Gastrocnemius medialis (tissue), 4 donors: ENCODE measurements at regions of chr4 and their contacts with region 1.

Region 1: DNA sequence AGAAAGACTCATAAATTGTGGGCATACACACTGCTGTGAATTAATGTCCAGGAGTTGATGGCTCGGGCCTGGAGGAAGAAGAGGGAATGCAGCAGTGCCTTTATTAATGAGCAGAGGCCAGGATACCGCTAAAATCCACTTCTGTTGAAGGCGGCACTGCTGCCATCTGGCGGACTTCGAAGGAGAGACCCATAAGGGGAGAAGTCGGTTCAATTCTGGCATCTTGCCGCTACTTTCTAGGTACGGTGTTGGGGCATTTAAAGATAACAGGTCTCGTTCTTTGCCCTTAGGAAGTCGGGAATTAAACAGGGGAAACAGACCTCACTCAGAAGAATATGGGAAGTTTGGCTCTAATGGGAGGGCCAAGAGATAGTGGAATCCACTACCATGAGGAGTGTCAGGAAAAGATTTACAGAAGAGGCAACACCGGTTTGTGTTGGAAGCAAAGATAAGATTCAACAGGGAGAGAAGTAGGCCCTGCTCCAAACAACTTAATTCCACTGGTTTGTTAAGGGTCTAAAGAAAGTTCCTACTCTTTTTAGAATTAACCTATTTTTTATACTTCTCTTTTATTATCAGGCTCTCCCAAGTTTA is 133.6 kb upstream of the GIMD1 start:
- DNase-seq: peak in 1 of 2 donors; percentile 18
- ATAC-seq: no peak
- H3K4me3 ChIP-seq: no peak overlapping the region
- H3K27ac ChIP-seq: no peak overlapping the region
- H3K4me1 ChIP-seq: no peaks in the 10 kb centered on the region
- H3K27me3 ChIP-seq: no peaks in the 10 kb centered on the region
- CTCF ChIP-seq: peak in 4 of 5 experiments; percentile 26 to 51 (median 34)
- POLR2A ChIP-seq: no peak

Region 2: GRCh38 chr4:106238820-106239420 is 263.3 kb before region 1 on chr4:
- in situ Hi-C with region 1: loop called in 1 of 4 experiments (anchors 25 kb)
- intact Hi-C with region 1: no loop called
- DNase-seq: no peak
- ATAC-seq: peak in 1 of 2 donors; percentile 49
- H3K4me3 ChIP-seq: no peak overlapping the region
- H3K27ac ChIP-seq: no peak overlapping the region
- H3K4me1 ChIP-seq: peaks cover 0 to 14% of the 10 kb centered on the region in 2 donors
- H3K27me3 ChIP-seq: no peaks in the 10 kb centered on the region
- CTCF ChIP-seq: peak in 3 of 5 experiments; percentile 10 to 42 (median 26)
- POLR2A ChIP-seq: no peak

Region 3: DNA sequence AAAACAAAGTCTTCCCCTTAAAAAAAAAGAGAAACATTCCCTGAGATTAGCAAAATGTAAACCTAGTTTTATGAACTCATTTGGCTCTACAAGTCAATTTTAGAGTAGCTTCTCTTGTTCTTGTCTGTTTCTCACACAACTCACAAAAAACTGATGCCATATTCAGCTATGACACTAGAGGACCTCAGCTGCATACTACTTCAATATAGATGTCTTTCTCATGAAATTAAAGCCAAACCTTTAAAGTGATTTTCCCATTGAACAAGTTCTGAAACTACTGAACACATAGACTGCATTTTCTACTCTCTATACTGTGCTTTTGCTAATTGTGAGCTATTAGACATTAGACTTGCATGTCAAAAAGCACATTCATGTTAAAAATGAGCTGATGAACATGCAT is 236.0 kb before region 1 on chr4:
- in situ Hi-C with region 1: no loop called
- intact Hi-C with region 1: loop called (anchors 5 kb)
- DNase-seq: no peak
- ATAC-seq: no peak
- H3K4me3 ChIP-seq: no peak overlapping the region
- H3K27ac ChIP-seq: no peak overlapping the region
- H3K4me1 ChIP-seq: peaks cover 0 to 6% of the 10 kb centered on the region in 2 donors
- H3K27me3 ChIP-seq: no peaks in the 10 kb centered on the region
- CTCF ChIP-seq: peak in 2 of 5 experiments; percentile 26 to 35
- POLR2A ChIP-seq: no peak

Region 4: GRCh38 chr4:106369456-106370060 is 132.6 kb before region 1 on chr4:
- in situ Hi-C with region 1: no loop called
- intact Hi-C with region 1: loop called (anchors 5 kb)
- DNase-seq: no peak
- ATAC-seq: no peak
- H3K4me3 ChIP-seq: no peak overlapping the region
- H3K27ac ChIP-seq: no peak overlapping the region
- H3K4me1 ChIP-seq: peaks cover 6 to 9% of the 10 kb centered on the region in 2 donors
- H3K27me3 ChIP-seq: no peaks in the 10 kb centered on the region
- CTCF ChIP-seq: peak in 4 of 5 experiments; percentile 29 to 60 (median 44)
- POLR2A ChIP-seq: no peak